Sigmoid colon (tissue), 7 donors: ENCODE measurements at regions of chr1 and their contacts with region 1.

Region 1: GRCh38 chr1:91885716-91886506 is at the start of gene TGFBR3:
- DNase-seq: peak; percentile 98
- H3K4me3 ChIP-seq: peak within 1 kb of the TSS; percentile 89 to 100 (median 96)
- H3K27ac ChIP-seq: peak within 1 kb of the TSS; percentile 95 to 99 (median 98)
- H3K4me1 ChIP-seq: peaks cover 0 to 39% (median 24%) of the 10 kb centered on the region in 4 donors
- H3K27me3 ChIP-seq: no peaks in the 10 kb centered on the region
- CTCF ChIP-seq: peak in 3 of 4 experiments; percentile 38 to 59 (median 49)
- EP300 ChIP-seq: peak in 2 of 4 donors; percentile 49 to 70
- POLR2A ChIP-seq: peak; percentile 69 to 76
- total RNA-seq, gene TGFBR3: 92.2 to 170 (median 141) TPM

Region 2: DNA sequence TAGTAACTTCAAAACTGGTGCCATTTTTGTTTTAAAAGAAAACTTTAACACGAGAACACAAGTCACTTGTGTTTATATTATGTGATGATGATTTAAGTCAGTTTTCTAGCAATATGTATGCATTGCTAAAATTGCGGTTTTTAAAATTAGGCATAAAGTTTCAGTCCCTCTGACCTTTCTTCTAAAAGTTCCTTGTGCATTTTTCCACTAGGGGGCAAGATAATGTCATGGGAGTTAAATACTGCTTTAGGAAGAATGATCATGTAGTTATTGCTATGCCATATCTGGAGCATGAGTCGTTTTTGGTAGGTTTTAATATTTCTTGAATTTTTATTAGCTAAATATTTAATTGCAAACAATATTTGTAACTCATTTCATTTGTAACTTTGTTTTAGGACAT is 374.5 kb before region 1 on chr1:
- intact Hi-C with region 1: loop called (anchors 2 kb)
- DNase-seq: no peak
- H3K4me3 ChIP-seq: no peak overlapping the region
- H3K27ac ChIP-seq: no peak overlapping the region
- H3K4me1 ChIP-seq: peaks cover 0 to 21% (median 0%) of the 10 kb centered on the region in 4 donors
- H3K27me3 ChIP-seq: no peaks in the 10 kb centered on the region
- CTCF ChIP-seq: peak; percentile 48 to 70 (median 60)
- EP300 ChIP-seq: no peak
- POLR2A ChIP-seq: no peak

Region 3: GRCh38 chr1:91725989-91726721 is 159.8 kb before region 1 on chr1:
- intact Hi-C with region 1: loop called (anchors 5 kb)
- DNase-seq: peak; percentile 89
- H3K4me3 ChIP-seq: peak overlapping the region in 2 of 4 donors; percentile 8 to 16
- H3K27ac ChIP-seq: peak overlapping the region; percentile 76 to 94 (median 88)
- H3K4me1 ChIP-seq: peaks cover 0 to 61% (median 52%) of the 10 kb centered on the region in 4 donors
- H3K27me3 ChIP-seq: no peaks in the 10 kb centered on the region
- CTCF ChIP-seq: no peak
- EP300 ChIP-seq: peak; percentile 22 to 94 (median 81)
- POLR2A ChIP-seq: no peak

Region 4: DNA sequence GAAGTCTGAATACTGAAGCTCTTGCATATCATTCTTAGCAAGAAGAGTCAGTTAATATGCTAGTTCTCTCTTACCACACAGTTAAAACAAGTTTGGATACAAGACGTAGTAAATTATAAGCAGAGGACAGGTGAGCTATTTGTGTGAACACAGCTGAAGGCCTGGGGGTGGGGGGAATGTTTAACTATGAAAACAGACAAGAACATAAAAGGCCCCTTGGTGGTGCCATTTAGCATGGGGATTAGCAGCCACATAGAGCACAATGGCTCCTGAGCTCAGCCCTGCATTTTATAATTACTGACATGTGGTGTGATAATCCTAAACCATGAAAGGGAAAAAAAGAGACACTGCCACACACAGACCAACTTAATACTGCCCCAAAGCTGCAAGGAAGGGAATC is 94.8 kb before region 1 on chr1:
- intact Hi-C with region 1: loop called (anchors 1 kb)
- DNase-seq: no peak
- H3K4me3 ChIP-seq: no peak overlapping the region
- H3K27ac ChIP-seq: peak overlapping the region; percentile 45 to 80 (median 75)
- H3K4me1 ChIP-seq: peaks cover 0 to 80% (median 75%) of the 10 kb centered on the region in 4 donors
- H3K27me3 ChIP-seq: no peaks in the 10 kb centered on the region
- CTCF ChIP-seq: no peak
- EP300 ChIP-seq: no peak
- POLR2A ChIP-seq: no peak

Region 5: DNA sequence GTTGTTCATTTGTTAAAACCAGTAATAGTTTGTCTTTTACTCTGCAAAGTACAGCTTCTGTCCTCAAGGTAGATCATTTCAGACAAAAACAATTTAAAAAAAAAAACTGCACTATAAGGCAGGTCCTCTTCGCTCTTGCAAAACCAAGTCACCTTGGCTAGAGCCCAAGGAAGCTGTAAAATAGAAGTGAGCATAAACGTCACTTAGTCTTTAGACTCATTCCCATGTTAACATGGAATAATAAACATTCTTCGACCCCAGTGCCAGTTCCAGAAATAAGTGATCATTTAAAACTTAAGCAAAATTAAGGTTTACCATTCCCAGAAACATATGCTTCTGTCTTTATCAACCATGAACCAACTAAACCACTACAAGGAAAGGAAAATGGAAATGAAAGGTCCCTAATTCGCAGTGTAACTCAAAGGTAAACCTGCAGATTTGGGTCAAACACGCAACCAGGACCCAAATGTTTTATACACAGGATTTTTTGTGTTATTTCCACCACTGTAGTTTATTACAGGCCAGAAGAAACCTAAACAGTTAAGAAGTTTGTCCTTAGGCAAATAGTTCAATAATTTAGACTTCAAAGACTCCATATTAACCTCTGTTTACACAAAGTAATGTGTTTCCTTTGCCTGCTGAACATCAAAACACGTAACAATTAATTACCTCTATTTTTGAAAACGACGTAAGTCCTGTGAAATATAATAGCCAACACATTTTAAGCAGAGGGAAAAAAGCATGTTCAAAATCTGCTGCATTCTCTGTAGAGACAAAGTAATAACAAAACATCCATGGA is 54.6 kb before region 1 on chr1:
- intact Hi-C with region 1: no loop called
- DNase-seq: peak; percentile 75
- H3K4me3 ChIP-seq: no peak overlapping the region
- H3K27ac ChIP-seq: peak overlapping the region; percentile 64 to 81 (median 79)
- H3K4me1 ChIP-seq: peaks cover 0 to 86% (median 75%) of the 10 kb centered on the region in 4 donors
- H3K27me3 ChIP-seq: no peaks in the 10 kb centered on the region
- CTCF ChIP-seq: no peak
- EP300 ChIP-seq: peak in 1 of 4 donors; percentile 34
- POLR2A ChIP-seq: no peak

Region 6: GRCh38 chr1:91929250-91929649 is 43.3 kb after region 1 on chr1:
- intact Hi-C with region 1: loop called (anchors 5 kb)
- DNase-seq: no peak
- H3K4me3 ChIP-seq: no peak overlapping the region
- H3K27ac ChIP-seq: no peak overlapping the region
- H3K4me1 ChIP-seq: no peaks in the 10 kb centered on the region
- H3K27me3 ChIP-seq: no peaks in the 10 kb centered on the region
- CTCF ChIP-seq: no peak
- EP300 ChIP-seq: no peak
- POLR2A ChIP-seq: no peak

Region 7: DNA sequence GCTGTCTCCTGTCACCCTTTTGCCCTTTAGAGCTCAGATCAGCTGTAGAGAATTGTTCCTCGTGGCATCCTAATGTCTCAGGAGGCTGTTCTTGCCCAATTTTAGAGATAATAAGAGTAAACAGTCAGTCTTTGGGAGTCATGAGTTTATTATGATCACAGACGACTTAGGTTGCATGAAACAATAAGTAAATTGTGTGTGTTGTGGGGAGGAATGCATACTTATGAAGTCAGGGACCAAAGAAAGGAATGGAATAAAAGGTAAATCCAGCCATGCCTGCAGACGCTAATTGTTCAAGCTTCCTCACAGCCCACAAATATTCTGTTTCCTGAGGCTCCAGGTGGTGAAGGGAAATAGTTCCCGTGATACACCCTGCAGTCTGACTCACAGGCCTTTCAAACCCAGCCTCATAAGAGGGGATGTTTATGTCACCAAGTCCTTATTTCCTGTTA is 144.8 kb after region 1 on chr1:
- intact Hi-C with region 1: no loop called
- DNase-seq: no peak
- H3K4me3 ChIP-seq: peak overlapping the region in 3 of 4 donors; percentile 50 to 60 (median 58)
- H3K27ac ChIP-seq: peak overlapping the region in 1 of 4 donors; percentile 45
- H3K4me1 ChIP-seq: peaks cover 0 to 9% (median 5%) of the 10 kb centered on the region in 4 donors
- H3K27me3 ChIP-seq: peaks cover 0 to 11% (median 0%) of the 10 kb centered on the region in 3 donors
- CTCF ChIP-seq: no peak
- EP300 ChIP-seq: no peak
- POLR2A ChIP-seq: no peak